Motor neuron (in vitro differentiated cells): ENCODE measurements at regions of chr18 and their contacts with region 1.

Region 1: GRCh38 chr18:13216092-13216582 is 2.4 kb upstream of the LDLRAD4 start:
- ATAC-seq: peak; percentile 25 to 55 (median 42)
- H3K4me3 ChIP-seq: peak overlapping the region in 2 of 5 donors; percentile 9 to 68
- H3K27ac ChIP-seq: no peak overlapping the region
- H3K4me1 ChIP-seq: peaks cover 0 to 2% of the 10 kb centered on the region in 2 donors

Region 2: GRCh38 chr18:13500227-13500865 is 284.2 kb after region 1 on chr18:
- in situ Hi-C with region 1: loop called in 1 of 9 experiments (anchors 25 kb)
- ATAC-seq: peak; percentile 80 to 97 (median 91)
- H3K4me3 ChIP-seq: peak overlapping the region in 1 of 5 donors; percentile 2
- H3K27ac ChIP-seq: peak overlapping the region in 1 of 2 donors; percentile 33
- H3K4me1 ChIP-seq: peaks cover 9 to 20% of the 10 kb centered on the region in 2 donors

Region 3: GRCh38 chr18:13530879-13531387 is 314.8 kb after region 1 on chr18:
- in situ Hi-C with region 1: loop called in 1 of 9 experiments (anchors 25 kb)
- ATAC-seq: peak; percentile 56 to 100 (median 78)
- H3K4me3 ChIP-seq: no peak overlapping the region
- H3K27ac ChIP-seq: no peak overlapping the region
- H3K4me1 ChIP-seq: no peaks in the 10 kb centered on the region

Region 4: GRCh38 chr18:13629841-13630715 is 413.9 kb after region 1 on chr18:
- in situ Hi-C with region 1: loop called in 2 of 9 experiments (anchors 25 kb)
- ATAC-seq: peak; percentile 97 to 99 (median 98)
- H3K4me3 ChIP-seq: no peak overlapping the region
- H3K27ac ChIP-seq: no peak overlapping the region
- H3K4me1 ChIP-seq: peaks cover 4% of the 10 kb centered on the region in 2 donors